ENCODE measurements at regions of chr18 and their contacts with region 1.

Region 1: GRCh38 chr18:72378016-72378415 is 166.1 kb downstream of the CBLN2 start:
- DNase-seq: no peak
- ATAC-seq: no peak
- H3K4me3 ChIP-seq: no peak overlapping the region
- H3K27ac ChIP-seq: no peak overlapping the region
- H3K4me1 ChIP-seq: no peaks in the 10 kb centered on the region
- H3K27me3 ChIP-seq: no peaks in the 10 kb centered on the region; a peak in 1 of 5 replicates
- CTCF ChIP-seq: no peak
- EP300 ChIP-seq: no peak
- POLR2A ChIP-seq: no peak
- RAD21 ChIP-seq: no peak

Region 2: DNA sequence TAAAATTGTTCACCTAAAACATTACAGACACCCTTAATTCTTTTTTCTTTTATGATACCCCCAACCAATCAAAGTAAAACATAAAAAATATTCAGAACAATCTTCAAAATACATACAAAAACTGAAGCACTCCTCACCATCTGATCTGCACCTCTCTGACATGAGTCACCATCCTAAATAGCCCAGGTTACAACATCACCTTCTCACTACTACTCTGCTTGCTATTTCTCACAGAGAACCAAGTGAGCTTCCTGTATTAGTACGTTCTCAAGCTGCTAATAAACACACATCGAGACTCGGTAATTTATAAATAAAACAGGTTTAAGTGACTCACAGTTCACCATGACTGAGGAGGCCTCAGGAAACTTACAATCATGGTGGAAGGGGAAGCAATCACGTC is 17.4 kb before region 1 on chr18:
- CTCF ChIA-PET with region 1: no interaction called
- POLR2A ChIA-PET with region 1: no interaction called
- in situ Hi-C with region 1: no loop called
- intact Hi-C with region 1: loop called (anchors 1 kb)
- DNase-seq: no peak
- ATAC-seq: no peak
- H3K4me3 ChIP-seq: no peak overlapping the region
- H3K27ac ChIP-seq: no peak overlapping the region
- H3K4me1 ChIP-seq: no peaks in the 10 kb centered on the region
- H3K27me3 ChIP-seq: no peaks in the 10 kb centered on the region
- CTCF ChIP-seq: no peak
- EP300 ChIP-seq: no peak
- POLR2A ChIP-seq: no peak
- RAD21 ChIP-seq: no peak